ENCODE measurements at regions of chr9 and their contacts with region 1.

Region 1: GRCh38 chr9:22079873-22080341 is 70.8 kb upstream of the CDKN2B start:
- DNase-seq: peak in 1 of 2 donors; percentile 12
- ATAC-seq: peak in 7 of 8 donors; percentile 65 to 96 (median 82)
- H3K4me3 ChIP-seq: no peak overlapping the region
- H3K27ac ChIP-seq: peak overlapping the region in 1 of 10 donors; percentile 21
- H3K4me1 ChIP-seq: peaks cover 0 to 4% (median 0%) of the 10 kb centered on the region in 9 donors
- H3K27me3 ChIP-seq: no peaks in the 10 kb centered on the region
- CTCF ChIP-seq: no peak

Region 2: DNA sequence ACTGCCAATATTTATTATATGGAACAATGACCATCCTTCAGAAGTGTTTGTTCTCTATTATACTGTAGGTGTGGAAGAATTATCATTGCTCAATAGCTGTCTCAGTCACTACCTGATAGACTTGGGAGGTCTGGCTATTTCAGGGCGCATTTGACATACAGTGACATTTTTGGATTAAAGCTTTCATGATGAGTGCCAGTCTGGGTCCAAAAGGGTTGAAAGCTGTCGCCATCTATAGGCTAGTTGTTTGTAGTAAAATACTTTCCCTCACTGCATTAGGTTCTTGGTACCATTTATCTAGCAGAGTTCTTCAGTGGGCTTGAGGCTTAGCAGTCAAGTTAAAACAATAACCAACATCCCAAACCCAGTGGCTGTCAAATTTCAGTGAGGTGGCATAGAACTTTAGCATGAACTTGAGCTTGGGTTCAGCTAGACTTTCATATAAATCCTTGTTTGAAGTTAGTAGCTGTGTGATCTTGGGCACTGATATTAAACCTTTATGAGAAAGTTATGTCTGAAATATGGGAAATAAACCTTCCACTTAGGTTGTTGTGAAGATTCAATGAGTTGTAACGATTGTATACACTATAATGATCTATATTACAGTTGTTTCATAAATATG is 39.7 kb after region 1 on chr9:
- intact Hi-C with region 1: loop called in 1 of 10 experiments (anchors 10 kb)
- DNase-seq: no peak
- ATAC-seq: peak in 6 of 8 donors; percentile 27 to 77 (median 50)
- H3K4me3 ChIP-seq: no peak overlapping the region
- H3K27ac ChIP-seq: no peak overlapping the region
- H3K4me1 ChIP-seq: peaks cover 0 to 10% (median 0%) of the 10 kb centered on the region in 9 donors
- H3K27me3 ChIP-seq: peaks cover 0 to 3% (median 0%) of the 10 kb centered on the region in 7 donors
- CTCF ChIP-seq: peak in 7 of 9 donors; percentile 32 to 55 (median 45)